ENCODE measurements at regions of chr11 and their contacts with region 1.

Region 1: GRCh38 chr11:112113539-112114457 is 27.1 kb downstream of the SDHD start:
- DNase-seq: no peak
- H3K4me3 ChIP-seq: no peak overlapping the region
- H3K27ac ChIP-seq: no peak overlapping the region
- H3K4me1 ChIP-seq: no peaks in the 10 kb centered on the region
- H3K27me3 ChIP-seq: no peaks in the 10 kb centered on the region
- CTCF ChIP-seq: peak; percentile 48 to 74 (median 67)
- POLR2A ChIP-seq: no peak

Region 2: DNA sequence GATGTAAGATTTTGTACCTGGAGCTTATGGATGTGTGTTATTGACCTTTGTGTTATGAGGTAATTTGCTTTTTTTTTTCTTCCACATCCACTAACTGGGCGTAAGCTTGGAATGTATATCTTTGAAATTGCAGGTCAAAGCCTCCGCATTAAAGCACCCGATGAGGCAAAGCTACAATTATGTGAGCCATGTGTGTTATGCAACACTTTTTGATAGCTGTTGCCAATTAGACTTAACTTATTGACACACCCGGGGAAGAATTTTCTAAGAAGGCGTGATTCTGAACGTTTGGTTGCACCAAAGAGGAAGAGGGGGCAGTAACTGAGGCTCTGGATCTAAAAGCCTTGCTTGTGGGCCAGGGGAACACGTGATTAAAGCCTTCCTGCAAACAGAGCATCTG is 52.7 kb after region 1 on chr11:
- intact Hi-C with region 1: loop called in 1 of 2 experiments (anchors 5 kb)
- DNase-seq: no peak
- H3K4me3 ChIP-seq: no peak overlapping the region
- H3K27ac ChIP-seq: no peak overlapping the region
- H3K4me1 ChIP-seq: no peaks in the 10 kb centered on the region
- H3K27me3 ChIP-seq: no peaks in the 10 kb centered on the region
- CTCF ChIP-seq: no peak
- POLR2A ChIP-seq: no peak

Region 3: DNA sequence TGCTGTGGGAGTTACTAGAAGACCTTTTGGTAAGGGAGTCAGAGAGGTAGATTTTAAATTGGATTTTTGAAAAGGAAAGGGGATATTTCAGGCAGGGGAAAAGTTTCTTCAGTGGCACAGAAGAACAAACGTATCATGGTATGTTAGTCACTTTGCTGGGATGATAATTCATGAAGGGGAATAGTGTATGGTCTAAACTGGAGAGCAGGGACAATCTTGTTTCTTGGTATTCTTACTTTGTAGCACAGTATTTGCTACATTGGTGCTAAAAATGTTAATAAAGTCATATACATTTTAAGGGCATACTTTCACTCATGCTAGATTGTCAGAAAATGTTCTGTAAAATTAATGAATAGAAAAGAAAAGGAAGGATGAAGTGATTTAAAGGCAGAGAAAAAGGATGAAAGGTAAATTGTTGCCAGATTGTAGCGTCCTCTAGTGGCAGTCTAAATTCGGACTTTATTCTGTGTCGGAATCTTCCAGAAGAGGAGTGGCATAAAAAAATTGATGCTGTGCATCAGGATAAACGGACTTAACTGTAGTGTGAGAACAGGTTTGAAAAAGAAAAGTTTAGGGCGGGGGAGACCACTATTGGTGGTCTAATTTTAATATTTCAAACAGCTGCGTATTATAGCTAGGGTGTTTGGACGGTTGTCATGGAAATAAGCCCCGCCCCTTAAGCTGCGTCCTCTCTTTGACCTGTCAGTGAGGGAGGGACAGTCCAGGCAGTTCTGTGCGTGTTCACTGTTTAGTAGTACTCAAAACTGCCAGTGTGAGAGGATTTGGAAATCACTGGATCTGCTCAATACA is 61.2 kb after region 1 on chr11 and contains the start of gene BCO2:
- intact Hi-C with region 1: loop called in 1 of 2 experiments (anchors 5 kb)
- DNase-seq: peak; percentile 87 to 95 (median 92)
- H3K4me3 ChIP-seq: peak within 1 kb of the TSS in 3 of 4 donors; percentile 34 to 52 (median 35)
- H3K27ac ChIP-seq: peak within 1 kb of the TSS; percentile 50 to 82 (median 62)
- H3K4me1 ChIP-seq: peaks cover 0 to 18% of the 10 kb centered on the region in 2 donors
- H3K27me3 ChIP-seq: no peaks in the 10 kb centered on the region
- CTCF ChIP-seq: peak; percentile 80 to 99 (median 94)
- POLR2A ChIP-seq: peak in 1 of 2 donors; percentile 72
- total RNA-seq, gene BCO2: 26.0 to 72.6 (median 48.0) TPM

Region 4: GRCh38 chr11:112216591-112217105 is 102.8 kb after region 1 on chr11:
- intact Hi-C with region 1: no loop called
- DNase-seq: no peak
- H3K4me3 ChIP-seq: no peak overlapping the region
- H3K27ac ChIP-seq: no peak overlapping the region
- H3K4me1 ChIP-seq: peaks cover 0 to 18% of the 10 kb centered on the region in 2 donors
- H3K27me3 ChIP-seq: no peaks in the 10 kb centered on the region
- CTCF ChIP-seq: no peak
- POLR2A ChIP-seq: no peak

Region 5: GRCh38 chr11:112334381-112334780 is 220.6 kb after region 1 on chr11:
- intact Hi-C with region 1: no loop called
- DNase-seq: no peak
- H3K4me3 ChIP-seq: no peak overlapping the region
- H3K27ac ChIP-seq: no peak overlapping the region
- H3K4me1 ChIP-seq: no peaks in the 10 kb centered on the region
- H3K27me3 ChIP-seq: no peaks in the 10 kb centered on the region
- CTCF ChIP-seq: no peak
- POLR2A ChIP-seq: no peak